Left cardiac atrium (tissue), 4 donors: ENCODE measurements at regions of chr15 and their contacts with region 1.

Region 1: GRCh38 chr15:50590288-50590687 is 43.8 kb upstream of the USP50 start:
- DNase-seq: no peak
- ATAC-seq: no peak

Region 2: GRCh38 chr15:50496692-50497091 is 93.6 kb before region 1 on chr15:
- intact Hi-C with region 1: loop called in 1 of 2 experiments (anchors 10 kb)
- DNase-seq: no peak
- ATAC-seq: no peak

Region 3: GRCh38 chr15:50562735-50563640 is 27.3 kb before region 1 on chr15:
- intact Hi-C with region 1: no loop called
- DNase-seq: no peak
- ATAC-seq: no peak